ENCODE measurements at regions of chr21 and their contacts with region 1.

Region 1: DNA sequence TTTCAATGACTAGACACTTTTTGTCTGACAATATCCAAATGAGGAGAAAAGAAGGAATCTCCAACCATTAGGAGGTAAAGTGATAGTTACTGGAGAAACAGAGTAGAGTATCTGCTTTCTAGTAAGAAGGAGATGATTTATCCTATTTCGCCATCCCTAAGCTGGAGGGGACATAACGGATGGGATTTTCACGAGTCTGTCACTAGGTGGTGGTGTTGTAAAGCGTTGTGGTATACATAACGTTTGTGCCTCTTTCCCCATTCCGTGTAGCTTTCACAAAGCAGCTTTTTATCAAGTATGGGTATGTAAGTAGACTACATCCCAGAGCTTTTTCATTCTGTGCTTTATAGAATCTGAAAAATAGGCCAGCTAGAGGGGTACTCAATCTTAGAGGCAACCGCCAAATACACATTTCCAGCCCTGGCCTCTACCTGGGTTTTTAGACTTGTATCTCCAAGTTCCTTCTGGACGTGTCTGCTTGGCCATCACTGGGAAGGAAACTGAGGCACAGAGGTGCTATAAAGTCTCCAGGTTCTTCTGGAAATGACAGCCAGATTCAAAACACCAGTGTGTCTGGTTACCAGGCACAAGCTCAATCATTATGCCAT is 33.3 kb upstream of the FAM3B start:
- DNase-seq: peak; percentile 80
- H3K27ac ChIP-seq: no peak overlapping the region
- CTCF ChIP-seq: peak; percentile 79

Region 2: DNA sequence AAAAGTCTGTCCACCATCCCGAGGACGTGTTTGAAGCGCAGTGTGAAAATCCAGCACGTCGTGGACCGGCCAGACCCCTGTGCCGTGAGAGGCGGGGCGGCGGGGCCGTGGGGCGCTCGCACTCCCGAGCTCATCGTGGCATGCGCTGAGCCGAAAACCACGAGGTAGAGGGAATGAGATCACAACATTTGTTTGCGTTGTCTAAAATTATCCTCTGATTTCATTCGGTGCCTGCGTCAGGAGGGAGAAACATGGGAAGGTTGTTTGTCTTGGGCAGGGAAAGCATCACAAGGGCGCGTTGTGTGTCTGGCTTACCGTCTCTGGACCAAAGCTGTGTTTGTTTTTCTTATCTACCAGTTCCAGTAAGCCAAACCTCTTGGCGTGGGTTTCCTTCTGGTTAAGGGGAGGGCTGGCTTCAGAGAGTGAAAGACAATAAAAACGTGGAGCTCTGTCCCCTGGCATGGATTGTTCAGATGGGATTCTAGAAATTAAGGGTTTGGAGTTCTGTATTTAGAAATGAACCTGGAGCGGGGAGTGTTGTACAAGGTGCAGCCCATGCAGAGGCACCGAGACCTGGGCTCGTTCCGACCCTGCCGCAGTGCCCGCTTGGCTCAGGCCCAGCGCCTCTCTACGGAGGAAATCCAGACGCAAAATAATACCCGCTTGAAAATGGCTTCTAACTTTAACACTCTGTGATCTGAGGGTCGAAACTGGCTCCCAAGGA is 35.6 kb before region 1 on chr21:
- CTCF ChIA-PET with region 1: no interaction called
- POLR2A ChIA-PET with region 1: no interaction called
- DNase-seq: no peak
- H3K27ac ChIP-seq: no peak overlapping the region
- CTCF ChIP-seq: no peak

Region 3: GRCh38 chr21:41267346-41267745 is 16.0 kb before region 1 on chr21:
- CTCF ChIA-PET with region 1: interaction called, 10 read pairs
- POLR2A ChIA-PET with region 1: no interaction called
- DNase-seq: no peak
- H3K27ac ChIP-seq: no peak overlapping the region
- CTCF ChIP-seq: no peak

Region 4: DNA sequence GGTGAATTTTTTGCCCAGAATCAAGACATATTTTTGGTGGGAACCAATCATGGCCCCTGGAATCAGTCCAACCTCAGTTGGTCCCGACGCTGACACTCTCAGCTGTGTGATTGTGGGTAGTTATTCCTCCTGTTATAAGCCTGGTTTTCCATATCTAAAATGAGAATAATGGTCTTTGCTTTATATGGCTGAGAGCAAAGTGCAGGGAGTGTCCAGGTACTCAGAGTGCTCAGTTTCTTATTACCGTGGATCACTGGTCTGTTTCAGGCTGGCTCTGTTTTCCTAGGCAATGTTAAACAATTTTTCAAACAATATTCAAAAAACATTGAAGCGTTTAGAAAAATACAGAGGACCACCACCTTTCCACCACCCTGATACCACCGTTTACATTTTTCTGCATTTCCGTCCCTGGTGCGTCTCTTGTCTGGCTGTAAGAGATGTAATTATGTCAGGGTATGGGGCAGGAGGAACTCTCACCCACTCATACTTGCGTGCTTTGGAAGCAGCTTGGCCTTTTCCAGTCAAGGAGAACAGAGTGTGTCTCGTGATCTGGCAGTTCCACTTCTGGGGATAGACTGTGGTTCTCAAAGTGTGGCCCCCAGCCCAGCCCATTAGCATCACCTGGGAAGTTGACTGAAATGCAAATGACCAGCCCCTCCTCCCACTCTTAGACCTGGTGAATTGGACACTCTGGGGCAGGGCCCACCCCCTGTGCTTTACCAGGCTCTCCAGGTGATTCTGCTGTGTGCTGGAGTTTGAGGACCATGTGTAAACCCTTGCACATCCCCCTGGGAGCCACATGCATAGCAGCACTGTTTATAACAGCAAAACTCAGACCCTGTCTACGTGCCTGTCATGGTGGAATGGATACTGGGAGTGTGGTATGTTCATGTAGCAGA is 149.5 kb after region 1 on chr21:
- CTCF ChIA-PET with region 1: no interaction called
- POLR2A ChIA-PET with region 1: no interaction called
- DNase-seq: no peak
- H3K27ac ChIP-seq: no peak overlapping the region
- CTCF ChIP-seq: no peak

Region 5: GRCh38 chr21:41460578-41461527 is 177.5 kb after region 1 on chr21:
- CTCF ChIA-PET with region 1: interaction called, 22 read pairs
- POLR2A ChIA-PET with region 1: no interaction called
- DNase-seq: peak; percentile 59
- H3K27ac ChIP-seq: no peak overlapping the region
- CTCF ChIP-seq: peak; percentile 72

Measured in RWPE1 (cell line).